Naive thymus-derived CD4-positive, alpha-beta T cell (primary cell): ENCODE measurements at regions of chr15 and their contacts with region 1.

Region 1: GRCh38 chr15:75684642-75685041 is 28.0 kb downstream of the CSPG4 start:
- DNase-seq: no peak
- ATAC-seq: no peak
- H3K4me3 ChIP-seq: no peak overlapping the region
- H3K4me3 Mint-ChIP-seq: no peak overlapping the region
- H3K27ac ChIP-seq: no peak overlapping the region
- H3K27ac Mint-ChIP-seq: no peak overlapping the region
- H3K4me1 ChIP-seq: no peaks in the 10 kb centered on the region
- H3K4me1 Mint-ChIP-seq: peaks cover 0 to 4% (median 0%) of the 10 kb centered on the region in 7 donors
- H3K27me3 ChIP-seq: no peaks in the 10 kb centered on the region
- H3K27me3 Mint-ChIP-seq: no peaks in the 10 kb centered on the region

Region 2: DNA sequence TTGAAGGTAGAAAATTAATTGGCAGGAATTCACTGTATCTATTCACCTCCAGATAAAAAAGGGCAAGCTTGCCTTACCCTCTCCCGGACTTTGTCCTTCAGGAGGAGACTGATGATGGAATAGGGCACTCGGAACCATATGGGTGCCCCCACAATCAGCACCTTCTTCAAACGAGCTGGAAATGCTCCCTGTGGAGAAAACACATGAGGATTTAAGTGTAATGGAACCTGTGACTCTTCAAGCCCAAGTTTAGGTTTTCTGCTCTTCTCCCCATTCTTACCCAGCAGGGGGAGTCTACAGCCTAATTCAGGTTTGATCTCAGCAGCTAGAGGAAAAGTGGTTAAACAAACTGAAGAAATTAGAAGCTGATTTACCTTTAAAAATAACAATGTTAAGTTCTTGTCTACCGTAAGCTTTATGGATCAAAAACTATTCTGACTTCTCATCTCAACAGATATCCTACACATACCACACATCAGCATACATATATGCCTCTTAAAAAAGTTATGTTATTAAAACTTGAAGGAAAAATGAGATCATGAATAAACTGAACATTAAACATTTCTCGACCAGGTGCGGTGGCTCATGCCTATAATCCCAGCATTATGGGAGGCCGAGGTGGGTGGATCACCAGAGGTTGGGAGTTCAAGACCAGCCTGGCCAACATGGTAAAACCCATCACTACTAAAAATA is 175.7 kb before region 1 on chr15:
- CTCF ChIA-PET with region 1: no interaction called
- POLR2A ChIA-PET with region 1: no interaction called
- intact Hi-C with region 1: loop called in 1 of 2 experiments (anchors 1 kb)
- DNase-seq: peak in 7 of 9 donors; percentile 38 to 65 (median 55)
- ATAC-seq: peak; percentile 37
- H3K4me3 ChIP-seq: no peak overlapping the region
- H3K4me3 Mint-ChIP-seq: no peak overlapping the region
- H3K27ac ChIP-seq: no peak overlapping the region
- H3K27ac Mint-ChIP-seq: peak overlapping the region in 5 of 9 donors; percentile 2 to 31 (median 21)
- H3K4me1 ChIP-seq: no peaks in the 10 kb centered on the region
- H3K4me1 Mint-ChIP-seq: peaks cover 0 to 5% (median 4%) of the 10 kb centered on the region in 7 donors
- H3K27me3 ChIP-seq: no peaks in the 10 kb centered on the region
- H3K27me3 Mint-ChIP-seq: no peaks in the 10 kb centered on the region